ENCODE measurements at regions of chr17 and their contacts with region 1.

Region 1: GRCh38 chr17:59829217-59830006 is 63.3 kb downstream of the TUBD1 start:
- DNase-seq: peak; percentile 99
- H3K4me3 ChIP-seq: peak overlapping the region in 1 of 3 experiments; percentile 28
- H3K27ac ChIP-seq: peak overlapping the region; percentile 97
- H3K4me1 ChIP-seq: peaks cover 32% of the 10 kb centered on the region
- H3K27me3 ChIP-seq: no peaks in the 10 kb centered on the region
- CTCF ChIP-seq: no peak
- POLR2A ChIP-seq: peak; percentile 15

Region 2: GRCh38 chr17:59769891-59770290 is 59.5 kb before region 1 on chr17:
- CTCF ChIA-PET with region 1: interaction called, 6 read pairs
- POLR2A ChIA-PET with region 1: interaction called, 3 read pairs
- dilution Hi-C with region 1: no loop called
- intact Hi-C with region 1: loop called (anchors 1 kb)
- DNase-seq: peak; percentile 89
- H3K4me3 ChIP-seq: peak overlapping the region in 1 of 3 experiments; percentile 11
- H3K27ac ChIP-seq: peak overlapping the region; percentile 98
- H3K4me1 ChIP-seq: peaks cover 53% of the 10 kb centered on the region
- H3K27me3 ChIP-seq: no peaks in the 10 kb centered on the region
- CTCF ChIP-seq: no peak
- POLR2A ChIP-seq: no peak

Region 3: GRCh38 chr17:59890714-59891113 is 61.3 kb after region 1 on chr17:
- CTCF ChIA-PET with region 1: no interaction called
- POLR2A ChIA-PET with region 1: no interaction called
- dilution Hi-C with region 1: no loop called
- intact Hi-C with region 1: no loop called
- DNase-seq: no peak
- H3K4me3 ChIP-seq: no peak overlapping the region
- H3K27ac ChIP-seq: no peak overlapping the region
- H3K4me1 ChIP-seq: peaks cover 11% of the 10 kb centered on the region
- H3K27me3 ChIP-seq: no peaks in the 10 kb centered on the region
- CTCF ChIP-seq: no peak
- POLR2A ChIP-seq: no peak

Measured in endothelial cell of umbilical vein (primary cell).